ENCODE measurements at regions of chr1 and their contacts with region 1.

Region 1: DNA sequence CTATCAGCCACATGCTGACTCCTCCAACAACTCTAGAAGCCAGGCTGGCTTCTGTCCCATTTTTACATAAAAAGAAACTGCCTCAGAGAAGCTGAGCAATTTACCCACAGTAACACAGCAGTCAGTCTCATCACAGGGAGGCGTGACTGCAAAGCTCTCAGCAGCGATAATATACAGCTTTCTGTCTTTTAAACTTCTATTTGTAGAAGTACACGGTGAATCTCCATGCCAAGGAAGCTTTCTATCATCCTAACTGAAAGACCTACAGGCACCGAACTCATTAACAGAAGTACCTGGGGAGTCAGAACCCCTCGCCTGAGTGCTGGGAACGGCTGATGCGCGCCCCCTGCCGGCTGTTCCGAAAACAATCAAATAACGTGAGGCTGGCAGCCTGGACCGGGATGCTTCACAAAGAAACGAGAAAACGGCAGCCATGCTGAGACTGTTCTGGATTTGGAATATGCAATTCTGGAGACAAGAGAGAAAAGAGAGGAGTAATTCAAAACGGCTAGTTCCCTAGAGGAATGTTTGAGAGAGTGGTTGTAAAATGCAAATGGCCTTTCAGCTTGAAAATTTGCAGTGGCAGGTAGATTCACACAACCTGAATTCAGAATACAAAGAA is 43.5 kb upstream of the RAB4A start:
- DNase-seq: peak; percentile 86
- ATAC-seq: peak; percentile 80
- H3K4me3 Mint-ChIP-seq: no peak overlapping the region
- H3K27ac Mint-ChIP-seq: no peak overlapping the region
- H3K4me1 Mint-ChIP-seq: peaks cover 10% of the 10 kb centered on the region
- H3K27me3 Mint-ChIP-seq: peaks cover 10% of the 10 kb centered on the region

Region 2: DNA sequence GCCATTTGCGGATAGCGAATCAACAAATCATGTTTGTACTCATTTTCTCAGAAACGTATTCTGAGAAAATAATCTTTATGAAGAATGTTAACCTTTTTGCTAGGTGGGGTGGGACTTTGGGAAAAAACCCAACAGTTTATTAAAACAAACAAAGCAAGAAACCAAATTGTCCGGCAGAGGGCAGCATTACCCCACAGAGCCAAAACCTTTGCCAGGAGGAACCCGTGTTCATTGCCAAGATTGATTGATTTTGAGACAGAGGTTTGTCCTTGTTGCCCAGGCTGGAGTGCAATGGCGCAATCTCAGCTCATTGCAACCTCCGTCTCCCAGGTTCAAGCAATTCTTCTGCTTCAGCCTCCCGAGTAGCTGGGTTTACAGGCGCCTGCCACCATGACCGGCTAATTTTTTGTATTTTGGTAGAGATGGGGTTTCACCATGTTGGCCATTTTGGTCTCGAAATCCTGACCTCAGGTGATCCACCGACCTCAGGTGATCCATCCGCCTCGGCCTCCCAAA is 563.0 kb before region 1 on chr1:
- CTCF ChIA-PET with region 1: interaction called, 73 read pairs
- POLR2A ChIA-PET with region 1: no interaction called
- DNase-seq: peak; percentile 86
- ATAC-seq: no peak
- H3K4me3 Mint-ChIP-seq: no peak overlapping the region
- H3K27ac Mint-ChIP-seq: no peak overlapping the region
- H3K4me1 Mint-ChIP-seq: peaks cover 7% of the 10 kb centered on the region
- H3K27me3 Mint-ChIP-seq: peaks cover 23% of the 10 kb centered on the region

Region 3: DNA sequence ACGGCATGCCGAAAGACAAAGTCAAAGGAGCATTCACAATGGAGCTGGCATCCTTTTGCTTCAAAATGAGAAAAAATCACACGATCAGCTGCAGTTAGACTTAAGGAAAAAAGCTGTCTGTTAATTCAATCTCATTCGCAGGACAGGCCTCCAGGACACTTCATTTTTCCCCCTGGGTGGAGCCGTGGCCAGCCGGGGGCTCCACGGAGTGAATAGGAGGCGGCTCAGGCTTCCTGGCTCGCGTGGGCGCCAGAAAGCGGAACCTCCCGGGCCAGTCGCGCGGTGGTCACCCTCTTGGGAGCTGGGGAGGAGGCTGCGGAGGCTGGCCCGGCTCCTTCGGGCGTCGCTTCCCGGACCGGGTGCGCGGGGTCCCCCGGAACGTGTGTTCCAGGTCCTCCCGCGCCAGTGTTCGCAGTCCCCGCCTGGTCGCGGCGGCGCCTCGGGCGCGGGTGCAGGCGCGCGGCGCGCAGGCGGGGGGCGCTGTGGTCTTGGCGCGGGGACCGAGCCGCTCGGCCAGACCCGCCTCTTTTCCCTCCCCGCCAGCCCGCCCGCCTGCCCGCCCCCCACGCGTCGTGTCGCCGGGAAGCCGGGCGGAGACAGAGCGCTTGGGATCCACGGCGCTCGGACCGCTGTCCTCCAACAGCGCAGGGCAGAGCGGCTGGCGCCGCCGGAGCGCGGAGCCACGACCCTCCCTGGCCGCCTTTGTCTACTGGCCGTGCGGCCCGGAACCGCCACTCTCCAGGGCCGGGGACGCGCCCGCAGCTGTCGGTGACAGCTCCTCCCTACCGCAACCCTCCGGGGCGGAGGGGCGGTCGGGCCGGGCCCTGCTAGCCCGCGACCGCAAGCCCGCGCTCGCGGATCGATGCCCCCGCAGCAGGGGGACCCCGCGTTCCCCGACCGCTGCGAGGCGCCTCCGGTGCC is 492.3 kb before region 1 on chr1 and contains the start of gene RHOU:
- CTCF ChIA-PET with region 1: interaction called, 68 read pairs
- POLR2A ChIA-PET with region 1: no interaction called
- DNase-seq: peak; percentile 76
- ATAC-seq: peak; percentile 88
- H3K4me3 Mint-ChIP-seq: peak within 1 kb of the TSS; percentile 85
- H3K27ac Mint-ChIP-seq: peak within 1 kb of the TSS; percentile 75
- H3K4me1 Mint-ChIP-seq: peaks cover 31% of the 10 kb centered on the region
- H3K27me3 Mint-ChIP-seq: peaks cover 23% of the 10 kb centered on the region
- total RNA-seq, gene RHOU: 9.5 to 9.7 TPM

Region 4: GRCh38 chr1:229043115-229043514 is 184.3 kb before region 1 on chr1:
- CTCF ChIA-PET with region 1: no interaction called
- POLR2A ChIA-PET with region 1: no interaction called
- DNase-seq: no peak
- ATAC-seq: no peak
- H3K4me3 Mint-ChIP-seq: no peak overlapping the region
- H3K27ac Mint-ChIP-seq: no peak overlapping the region
- H3K4me1 Mint-ChIP-seq: peaks cover 4% of the 10 kb centered on the region
- H3K27me3 Mint-ChIP-seq: peaks cover 31% of the 10 kb centered on the region

Region 5: DNA sequence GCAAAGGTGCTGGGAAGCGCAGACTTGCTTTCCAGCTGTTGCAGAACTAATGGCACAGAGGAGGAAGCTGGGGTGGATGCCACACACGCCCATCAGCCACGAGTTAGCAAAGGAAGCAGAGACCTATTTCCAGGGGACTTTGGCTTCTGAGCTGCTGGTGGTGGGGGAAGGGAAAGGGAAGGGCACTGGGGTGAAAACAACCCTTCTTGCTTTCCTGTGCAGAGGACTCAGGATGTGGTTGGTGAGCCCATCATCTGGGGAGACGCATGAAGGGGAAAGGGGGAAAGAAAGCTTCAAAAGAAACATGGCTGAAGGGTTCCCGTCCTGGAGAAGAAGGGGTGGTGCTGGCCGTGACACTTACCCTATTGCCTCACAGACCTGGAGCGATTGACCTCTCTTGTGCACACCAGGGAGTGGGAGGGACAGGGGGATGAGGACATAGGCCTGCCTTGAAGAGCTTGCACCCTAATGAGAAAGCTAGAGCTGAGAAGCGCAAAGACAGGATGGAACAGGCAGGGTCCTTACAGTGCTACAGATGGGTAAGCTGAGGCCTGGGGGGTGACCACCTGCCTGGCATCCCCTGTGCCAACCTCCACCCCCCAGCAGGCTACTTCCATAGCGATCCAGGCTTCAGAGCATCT is 97.3 kb before region 1 on chr1:
- CTCF ChIA-PET with region 1: interaction called, 20 read pairs
- POLR2A ChIA-PET with region 1: no interaction called
- DNase-seq: peak; percentile 58
- ATAC-seq: peak; percentile 40
- H3K4me3 Mint-ChIP-seq: peak overlapping the region; percentile 34
- H3K27ac Mint-ChIP-seq: peak overlapping the region; percentile 46
- H3K4me1 Mint-ChIP-seq: peaks cover 62% of the 10 kb centered on the region
- H3K27me3 Mint-ChIP-seq: peaks cover 9% of the 10 kb centered on the region

Region 6: GRCh38 chr1:229186373-229187056 is 40.9 kb before region 1 on chr1:
- CTCF ChIA-PET with region 1: interaction called, 18 read pairs
- POLR2A ChIA-PET with region 1: no interaction called
- DNase-seq: peak; percentile 64
- ATAC-seq: peak; percentile 98
- H3K4me3 Mint-ChIP-seq: no peak overlapping the region
- H3K27ac Mint-ChIP-seq: peak overlapping the region; percentile 73
- H3K4me1 Mint-ChIP-seq: peaks cover 21% of the 10 kb centered on the region
- H3K27me3 Mint-ChIP-seq: peaks cover 7% of the 10 kb centered on the region